Esophagus muscularis mucosa (tissue), 4 donors: ENCODE measurements at regions of chr15 and their contacts with region 1.

Region 1: GRCh38 chr15:31326156-31326732 is 391 bp upstream of the KLF13 start:
- DNase-seq: peak; percentile 100
- H3K4me3 ChIP-seq: peak overlapping the region; percentile 83 to 96 (median 92)
- H3K27ac ChIP-seq: peak overlapping the region; percentile 98 to 100 (median 100)
- H3K4me1 ChIP-seq: peaks cover 38 to 43% (median 42%) of the 10 kb centered on the region in 4 donors
- H3K27me3 ChIP-seq: no peaks in the 10 kb centered on the region
- CTCF ChIP-seq: no peak
- EP300 ChIP-seq: no peak
- POLR2A ChIP-seq: peak; percentile 94

Region 2: DNA sequence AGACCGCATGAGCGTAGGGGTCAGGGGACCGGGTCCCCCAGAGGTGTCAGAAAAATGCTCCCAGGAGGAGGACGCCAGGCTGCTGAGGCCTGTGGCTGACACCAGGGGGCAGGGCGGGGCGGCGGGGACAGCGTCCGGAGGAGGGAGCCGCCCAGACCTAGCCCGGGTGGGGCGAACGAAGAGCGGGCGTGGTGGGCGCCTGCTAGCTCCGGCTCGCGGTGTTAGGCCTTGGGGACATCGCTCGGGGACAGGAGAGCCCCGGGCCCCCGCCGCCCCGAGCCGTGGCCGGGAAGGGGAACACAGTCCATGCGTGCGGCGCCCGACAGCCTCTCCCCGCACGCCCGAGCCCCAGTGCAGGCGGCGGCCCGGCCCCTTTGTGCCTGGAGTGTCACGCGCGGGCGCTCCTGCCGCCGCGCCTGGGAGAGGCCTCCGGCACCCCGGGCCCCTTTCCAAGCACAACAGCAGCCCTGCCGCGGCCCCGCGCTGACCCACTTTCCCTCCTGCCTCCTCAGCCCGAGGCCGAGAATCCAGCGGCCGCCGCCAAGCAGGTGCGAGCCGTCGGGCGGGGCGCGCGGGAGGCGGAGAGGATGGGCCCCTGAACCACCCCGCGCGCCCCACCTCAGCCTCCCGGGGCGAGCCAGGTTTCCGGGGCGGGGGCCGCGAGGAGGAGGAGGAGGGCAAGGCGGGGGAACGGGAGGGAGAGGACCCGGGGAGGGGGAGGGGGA is 110.6 kb before region 1 on chr15:
- intact Hi-C with region 1: loop called (anchors 1 kb)
- DNase-seq: no peak
- H3K4me3 ChIP-seq: peak overlapping the region; percentile 62 to 76 (median 68)
- H3K27ac ChIP-seq: peak overlapping the region; percentile 86 to 97 (median 93)
- H3K4me1 ChIP-seq: peaks cover 29 to 49% (median 47%) of the 10 kb centered on the region in 4 donors
- H3K27me3 ChIP-seq: no peaks in the 10 kb centered on the region
- CTCF ChIP-seq: peak; percentile 88 to 93 (median 91)
- EP300 ChIP-seq: no peak
- POLR2A ChIP-seq: peak; percentile 16

Region 3: GRCh38 chr15:31236184-31237042 is 89.8 kb before region 1 on chr15:
- intact Hi-C with region 1: loop called (anchors 5 kb)
- DNase-seq: peak; percentile 96
- H3K4me3 ChIP-seq: peak overlapping the region; percentile 20 to 44 (median 30)
- H3K27ac ChIP-seq: peak overlapping the region; percentile 82 to 92 (median 86)
- H3K4me1 ChIP-seq: peaks cover 24 to 28% (median 26%) of the 10 kb centered on the region in 4 donors
- H3K27me3 ChIP-seq: no peaks in the 10 kb centered on the region
- CTCF ChIP-seq: no peak
- EP300 ChIP-seq: peak; percentile 64
- POLR2A ChIP-seq: no peak

Region 4: DNA sequence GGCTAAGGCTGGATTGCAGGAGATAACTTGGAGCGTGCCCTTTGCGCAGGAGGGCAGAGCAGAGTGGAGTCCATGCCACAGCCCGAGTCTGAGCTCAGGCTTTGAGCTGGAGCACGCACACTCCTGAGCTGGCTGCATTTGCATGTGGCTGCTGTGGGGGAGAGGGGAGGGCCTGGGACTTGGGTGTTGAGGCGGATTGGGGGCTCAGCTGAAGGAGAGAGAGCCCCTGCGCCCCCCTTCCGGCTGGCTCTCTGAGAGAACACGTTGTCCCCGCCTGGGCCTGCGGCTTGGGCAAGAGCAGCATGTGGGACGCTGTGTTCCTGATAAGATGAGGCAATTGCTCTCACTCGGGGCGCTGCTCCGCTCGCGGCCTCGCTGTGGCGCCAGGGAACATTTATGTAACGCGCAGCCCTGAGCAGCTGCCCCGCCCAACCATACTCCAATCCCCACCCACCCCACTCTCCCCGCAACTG is 39.4 kb after region 1 on chr15:
- intact Hi-C with region 1: loop called (anchors 2 kb)
- DNase-seq: peak; percentile 99
- H3K4me3 ChIP-seq: peak overlapping the region; percentile 48 to 56 (median 53)
- H3K27ac ChIP-seq: peak overlapping the region; percentile 92 to 93 (median 92)
- H3K4me1 ChIP-seq: peaks cover 83 to 94% (median 92%) of the 10 kb centered on the region in 4 donors
- H3K27me3 ChIP-seq: no peaks in the 10 kb centered on the region
- CTCF ChIP-seq: peak in 2 of 3 experiments; percentile 44 to 56
- EP300 ChIP-seq: peak; percentile 100
- POLR2A ChIP-seq: no peak

Region 5: DNA sequence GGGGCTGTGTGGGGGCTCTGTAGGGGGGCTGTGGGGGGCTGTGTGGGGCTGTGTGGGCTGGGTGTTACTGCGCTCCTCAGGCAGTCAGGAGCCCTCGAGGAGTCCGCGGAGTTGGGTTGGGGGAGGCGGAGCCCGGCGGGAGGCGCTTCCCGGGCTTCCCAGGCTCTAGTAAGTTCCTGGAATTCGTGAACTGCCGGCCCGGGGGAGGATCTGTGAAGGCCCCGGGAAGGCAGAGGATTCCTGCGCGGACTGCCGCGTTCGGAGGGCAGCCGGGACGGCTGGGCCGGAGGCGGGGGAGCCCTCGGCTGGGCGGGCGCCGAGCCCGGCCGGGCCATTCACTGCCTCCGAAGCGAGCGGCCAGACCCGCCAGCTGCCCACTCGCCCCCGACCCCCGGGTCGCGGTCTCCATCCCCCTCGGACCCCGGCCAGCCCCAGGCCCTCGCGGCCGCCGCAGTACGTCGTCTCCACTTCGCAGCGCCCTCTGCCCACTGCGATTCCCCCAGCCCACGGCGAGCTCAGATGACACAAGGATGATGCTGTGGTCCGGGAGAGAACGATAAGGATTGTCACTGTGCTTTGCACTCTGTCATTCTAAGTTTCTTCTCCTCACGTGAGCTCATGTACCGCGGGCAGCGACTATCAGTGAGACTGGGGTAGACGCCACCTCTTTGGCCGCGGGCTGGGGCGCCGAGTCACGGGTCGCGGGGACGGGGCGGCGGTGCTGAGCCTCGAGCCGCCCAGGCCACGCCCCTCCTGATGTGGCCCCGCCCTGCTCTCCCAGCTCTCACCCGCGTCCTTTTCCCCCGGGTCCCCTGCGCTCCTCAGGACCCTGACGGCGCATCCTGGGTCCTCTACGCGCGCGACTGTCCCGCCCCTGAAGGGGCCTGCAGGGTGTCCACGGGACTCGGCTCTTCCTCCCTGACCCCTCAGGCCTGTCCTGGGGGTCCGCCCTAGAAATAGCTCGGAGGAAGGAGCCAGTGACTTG is 65.7 kb after region 1 on chr15:
- intact Hi-C with region 1: loop called (anchors 2 kb)
- DNase-seq: peak; percentile 96
- H3K4me3 ChIP-seq: peak overlapping the region; percentile 56 to 76 (median 66)
- H3K27ac ChIP-seq: peak overlapping the region; percentile 85 to 97 (median 92)
- H3K4me1 ChIP-seq: peaks cover 33 to 59% (median 40%) of the 10 kb centered on the region in 4 donors
- H3K27me3 ChIP-seq: no peaks in the 10 kb centered on the region
- CTCF ChIP-seq: peak in 1 of 3 experiments; percentile 18
- EP300 ChIP-seq: peak; percentile 62
- POLR2A ChIP-seq: peak; percentile 96

Region 6: GRCh38 chr15:31435261-31435911 is 109.1 kb after region 1 on chr15:
- intact Hi-C with region 1: loop called (anchors 5 kb)
- DNase-seq: peak; percentile 94
- H3K4me3 ChIP-seq: peak overlapping the region; percentile 19 to 28 (median 24)
- H3K27ac ChIP-seq: peak overlapping the region; percentile 58 to 71 (median 68)
- H3K4me1 ChIP-seq: peaks cover 25 to 28% (median 27%) of the 10 kb centered on the region in 4 donors
- H3K27me3 ChIP-seq: no peaks in the 10 kb centered on the region
- CTCF ChIP-seq: peak; percentile 62 to 78 (median 73)
- EP300 ChIP-seq: no peak
- POLR2A ChIP-seq: no peak

Region 7: GRCh38 chr15:31488426-31489204 is 162.4 kb after region 1 on chr15:
- intact Hi-C with region 1: loop called (anchors 2 kb)
- DNase-seq: peak; percentile 91
- H3K4me3 ChIP-seq: no peak overlapping the region
- H3K27ac ChIP-seq: peak overlapping the region; percentile 33 to 60 (median 40)
- H3K4me1 ChIP-seq: peaks cover 22 to 28% (median 24%) of the 10 kb centered on the region in 4 donors
- H3K27me3 ChIP-seq: peaks cover 0 to 13% (median 2%) of the 10 kb centered on the region in 4 donors
- CTCF ChIP-seq: peak; percentile 87 to 92 (median 89)
- EP300 ChIP-seq: no peak
- POLR2A ChIP-seq: no peak